GM12878 (cell line): ENCODE measurements at regions of chr4 and their contacts with region 1.

Region 1: DNA sequence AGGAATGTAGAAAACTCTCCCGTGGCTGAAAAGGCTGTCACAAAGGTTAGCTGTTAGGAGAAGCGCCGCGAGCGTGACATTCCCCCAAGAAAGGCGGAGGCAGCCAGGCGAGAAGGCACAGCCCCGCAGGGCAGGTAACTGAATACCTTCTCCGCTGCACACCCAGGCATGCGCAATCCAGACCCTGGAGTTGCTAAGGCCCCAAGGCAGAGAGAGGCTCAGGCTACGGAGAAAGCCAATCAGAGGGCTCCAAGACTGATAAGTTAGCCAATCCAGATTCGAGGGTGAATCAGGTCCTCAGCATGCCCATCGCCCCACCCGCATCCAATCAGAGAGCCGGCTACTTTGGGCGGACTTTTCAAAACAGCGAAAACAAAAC is 485 bp upstream of the CCNG2 start:
- DNase-seq: peak; percentile 98
- ATAC-seq: peak; percentile 92
- H3K4me3 ChIP-seq: peak overlapping the region; percentile 93
- H3K27ac ChIP-seq: peak overlapping the region; percentile 99
- H3K4me1 ChIP-seq: peaks cover 35% of the 10 kb centered on the region
- H3K27me3 ChIP-seq: no peaks in the 10 kb centered on the region
- CTCF ChIP-seq: no peak
- EP300 ChIP-seq: no peak
- POLR2A ChIP-seq: peak; percentile 76
- RAD21 ChIP-seq: no peak

Region 2: GRCh38 chr4:76841026-76841425 is 315.5 kb before region 1 on chr4:
- CTCF ChIA-PET with region 1: no interaction called
- POLR2A ChIA-PET with region 1: no interaction called
- RAD21 ChIA-PET with region 1: no interaction called
- SMC1A ChIA-PET with region 1: no interaction called
- in situ Hi-C with region 1: no loop called
- intact Hi-C with region 1: no loop called
- DNase-seq: no peak
- ATAC-seq: no peak
- H3K4me3 ChIP-seq: no peak overlapping the region
- H3K27ac ChIP-seq: no peak overlapping the region
- H3K4me1 ChIP-seq: no peaks in the 10 kb centered on the region
- H3K27me3 ChIP-seq: no peaks in the 10 kb centered on the region
- CTCF ChIP-seq: no peak
- EP300 ChIP-seq: no peak
- POLR2A ChIP-seq: no peak
- RAD21 ChIP-seq: no peak

Region 3: GRCh38 chr4:76949276-76950051 is 207.1 kb before region 1 on chr4 and contains the start of gene SEPTIN11:
- CTCF ChIA-PET with region 1: no interaction called
- POLR2A ChIA-PET with region 1: interaction called, 3 read pairs
- RAD21 ChIA-PET with region 1: no interaction called
- SMC1A ChIA-PET with region 1: no interaction called
- in situ Hi-C with region 1: no loop called
- intact Hi-C with region 1: loop called (anchors 5 kb)
- DNase-seq: peak; percentile 55
- ATAC-seq: peak; percentile 86
- H3K4me3 ChIP-seq: peak within 1 kb of the TSS; percentile 95
- H3K27ac ChIP-seq: peak within 1 kb of the TSS; percentile 84
- H3K4me1 ChIP-seq: peaks cover 14% of the 10 kb centered on the region; the same call in 1 of the 2 replicates
- H3K27me3 ChIP-seq: no peaks in the 10 kb centered on the region
- CTCF ChIP-seq: no peak
- EP300 ChIP-seq: no peak
- POLR2A ChIP-seq: peak; percentile 97
- RAD21 ChIP-seq: no peak
- polyA plus RNA-seq, gene SEPTIN11: 24.7 to 27.1 TPM

Region 4: DNA sequence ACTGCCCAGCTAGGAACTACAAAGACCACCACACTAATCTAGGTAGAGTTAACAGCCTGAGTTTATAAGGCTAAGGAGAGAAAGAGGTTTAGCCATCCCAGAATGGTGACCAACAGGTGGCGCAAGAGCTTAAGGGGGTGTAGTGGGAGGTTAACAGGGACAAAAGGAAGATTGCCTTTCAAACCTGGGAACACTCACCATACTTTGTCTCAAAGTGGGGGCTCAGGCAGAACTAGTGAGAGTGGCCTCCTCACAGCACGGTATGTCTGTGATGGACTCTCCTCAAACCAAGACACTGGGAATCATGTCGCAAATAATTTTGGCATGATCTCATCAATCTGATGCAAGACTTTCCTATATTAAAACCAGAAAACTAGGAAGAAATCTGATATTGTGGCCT is 104.2 kb before region 1 on chr4:
- CTCF ChIA-PET with region 1: interaction called, 12 read pairs
- POLR2A ChIA-PET with region 1: no interaction called
- RAD21 ChIA-PET with region 1: interaction called, 7 read pairs
- SMC1A ChIA-PET with region 1: interaction called, 4 read pairs
- in situ Hi-C with region 1: no loop called
- intact Hi-C with region 1: no loop called
- DNase-seq: no peak
- ATAC-seq: peak; percentile 87
- H3K4me3 ChIP-seq: no peak overlapping the region
- H3K27ac ChIP-seq: no peak overlapping the region
- H3K4me1 ChIP-seq: no peaks in the 10 kb centered on the region
- H3K27me3 ChIP-seq: no peaks in the 10 kb centered on the region
- CTCF ChIP-seq: peak; percentile 73 to 77 (median 73)
- EP300 ChIP-seq: no peak
- POLR2A ChIP-seq: no peak
- RAD21 ChIP-seq: peak; percentile 72

Region 5: DNA sequence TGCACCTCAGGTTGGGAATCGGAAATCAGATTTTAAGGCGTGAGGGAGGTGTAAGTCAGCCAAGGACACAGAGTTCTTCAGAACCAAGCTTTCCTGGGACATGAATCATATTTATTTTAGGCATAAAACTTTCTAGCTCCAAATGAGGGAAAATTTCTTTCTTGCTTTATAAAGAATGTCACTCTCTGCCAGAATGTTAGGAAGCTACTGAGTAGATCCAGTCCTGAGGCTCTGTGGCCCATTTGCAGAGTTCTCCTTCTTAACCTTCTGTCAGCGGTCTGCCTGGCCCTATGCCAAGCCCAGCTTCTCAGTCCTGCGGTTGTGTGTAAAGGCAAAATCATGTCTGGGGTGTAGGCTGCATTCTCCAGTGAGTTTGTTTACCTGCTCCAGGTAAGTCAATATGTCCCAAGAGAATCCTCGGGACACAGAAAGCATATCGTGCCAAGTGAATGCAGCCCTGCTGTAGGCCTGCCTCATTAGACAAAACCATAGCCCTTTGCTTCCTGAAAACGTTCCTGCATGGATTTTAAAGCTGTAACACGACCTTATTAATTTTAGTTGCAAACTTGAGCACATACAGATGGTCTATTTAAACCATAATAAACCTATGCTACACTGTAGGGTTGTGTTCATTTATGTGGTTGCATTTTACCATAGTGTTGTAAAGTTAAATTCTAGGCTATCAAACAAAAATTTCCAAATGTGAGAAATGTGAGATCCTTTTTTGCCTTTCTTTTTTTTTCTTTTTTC is 51.6 kb before region 1 on chr4:
- CTCF ChIA-PET with region 1: interaction called, 3 read pairs
- POLR2A ChIA-PET with region 1: interaction called, 9 read pairs
- RAD21 ChIA-PET with region 1: interaction called, 12 read pairs
- SMC1A ChIA-PET with region 1: interaction called, 18 read pairs
- in situ Hi-C with region 1: no loop called
- intact Hi-C with region 1: no loop called
- DNase-seq: no peak
- ATAC-seq: peak; percentile 38
- H3K4me3 ChIP-seq: no peak overlapping the region
- H3K27ac ChIP-seq: no peak overlapping the region
- H3K4me1 ChIP-seq: 0 out of 2 replicates have a peak, but pooled peaks cover 3% of the 10 kb centered on the region
- H3K27me3 ChIP-seq: no peaks in the 10 kb centered on the region
- CTCF ChIP-seq: no peak
- EP300 ChIP-seq: no peak
- POLR2A ChIP-seq: no peak
- RAD21 ChIP-seq: no peak

Region 6: DNA sequence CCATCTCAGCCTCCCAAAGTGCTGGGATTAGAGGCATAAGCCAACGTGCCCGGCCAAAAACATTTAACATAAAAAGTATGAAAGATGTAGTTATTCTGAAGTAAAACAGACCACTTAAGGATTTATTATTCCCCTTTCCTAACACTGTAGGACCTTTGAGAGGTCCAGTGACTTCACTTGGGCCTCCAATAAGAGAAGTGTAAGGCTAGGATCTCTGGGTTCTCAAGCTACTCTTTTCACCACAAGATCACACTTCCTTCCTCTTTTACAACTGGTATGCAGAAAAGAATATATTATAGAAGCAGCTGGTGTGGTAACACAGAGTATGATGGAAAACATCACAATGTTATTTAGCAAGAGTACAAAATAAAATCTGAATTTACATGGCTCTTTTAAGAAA is 29.7 kb before region 1 on chr4:
- CTCF ChIA-PET with region 1: interaction called, 4 read pairs
- POLR2A ChIA-PET with region 1: no interaction called
- RAD21 ChIA-PET with region 1: interaction called, 5 read pairs
- SMC1A ChIA-PET with region 1: interaction called, 11 read pairs
- in situ Hi-C with region 1: no loop called
- intact Hi-C with region 1: no loop called
- DNase-seq: no peak
- ATAC-seq: peak; percentile 78
- H3K4me3 ChIP-seq: no peak overlapping the region
- H3K27ac ChIP-seq: no peak overlapping the region
- H3K4me1 ChIP-seq: peaks cover 6% of the 10 kb centered on the region; the same call in 1 of the 2 replicates
- H3K27me3 ChIP-seq: no peaks in the 10 kb centered on the region
- CTCF ChIP-seq: no peak
- EP300 ChIP-seq: no peak
- POLR2A ChIP-seq: no peak
- RAD21 ChIP-seq: no peak

Region 7: DNA sequence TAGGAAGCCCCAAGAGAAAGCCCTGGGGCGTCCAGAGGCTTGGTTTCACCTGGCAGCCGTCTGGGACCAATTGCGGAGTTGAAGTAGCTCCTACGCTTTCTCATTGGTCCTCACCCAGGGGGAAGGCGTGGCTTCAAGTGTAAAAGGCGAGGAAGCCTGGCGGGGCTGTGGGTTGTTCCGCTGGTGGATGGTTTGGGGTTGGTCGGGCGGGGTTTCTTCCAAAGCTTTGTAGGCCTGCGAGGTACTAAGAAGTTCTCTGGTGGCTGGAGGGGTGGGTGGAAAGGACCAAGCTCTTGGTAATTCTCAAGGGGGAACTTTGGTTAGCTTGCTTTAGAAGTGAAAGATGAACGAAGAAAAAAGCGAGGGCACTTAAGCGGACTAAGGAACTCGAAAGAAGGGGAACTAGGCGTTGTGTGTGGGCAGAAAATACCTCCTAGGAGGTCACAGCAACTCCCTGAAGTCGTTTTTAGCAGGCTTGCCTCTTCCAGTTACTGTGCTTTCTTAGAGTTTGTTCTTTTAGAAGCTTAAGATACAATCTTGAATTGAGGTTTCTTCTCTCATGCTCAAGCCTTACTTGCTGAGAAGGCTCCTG is 37.1 kb after region 1 on chr4:
- CTCF ChIA-PET with region 1: interaction called, 12 read pairs
- POLR2A ChIA-PET with region 1: interaction called, 47 read pairs
- RAD21 ChIA-PET with region 1: interaction called, 68 read pairs
- SMC1A ChIA-PET with region 1: interaction called, 177 read pairs
- in situ Hi-C with region 1: no loop called
- intact Hi-C with region 1: loop called (anchors 2 kb)
- DNase-seq: peak; percentile 69
- ATAC-seq: peak; percentile 96
- H3K4me3 ChIP-seq: peak overlapping the region; percentile 32; the same call in 1 of the 2 replicates
- H3K27ac ChIP-seq: peak overlapping the region; percentile 90
- H3K4me1 ChIP-seq: peaks cover 37% of the 10 kb centered on the region
- H3K27me3 ChIP-seq: no peaks in the 10 kb centered on the region
- CTCF ChIP-seq: no peak
- EP300 ChIP-seq: peak in 1 of 2 experiments; percentile 59; a peak in 1 of 4 replicates
- POLR2A ChIP-seq: peak; percentile 72
- RAD21 ChIP-seq: no peak